HepG2 (cell line): ENCODE measurements at regions of chr4 and their contacts with region 1.

Region 1: DNA sequence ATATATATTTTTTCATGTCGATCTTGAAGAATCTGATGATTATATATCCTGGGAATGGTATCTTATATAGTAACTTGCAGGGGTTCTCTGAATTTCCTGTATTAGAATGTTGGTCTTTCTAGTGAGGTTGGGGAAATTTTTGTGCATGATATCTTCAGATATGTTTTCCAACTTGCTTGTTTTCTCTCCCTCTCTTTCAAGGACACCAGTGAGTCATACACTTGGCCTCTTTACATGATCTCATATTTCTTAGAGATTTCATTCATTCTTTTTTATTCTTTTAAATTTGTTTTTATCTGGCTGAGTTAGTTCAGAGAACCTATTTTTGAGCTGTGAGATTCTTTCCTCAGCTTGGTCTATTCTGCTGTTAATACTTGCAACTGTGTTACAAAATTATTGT is 27.2 kb upstream of the C4orf17 start:
- DNase-seq: no peak
- ATAC-seq: no peak
- H3K4me3 ChIP-seq: no peak overlapping the region
- H3K27ac ChIP-seq: no peak overlapping the region
- H3K4me1 ChIP-seq: no peaks in the 10 kb centered on the region
- H3K27me3 ChIP-seq: no peaks in the 10 kb centered on the region; a peak in 1 of 5 replicates
- CTCF ChIP-seq: no peak
- EP300 ChIP-seq: no peak
- POLR2A ChIP-seq: no peak
- RAD21 ChIP-seq: no peak

Region 2: DNA sequence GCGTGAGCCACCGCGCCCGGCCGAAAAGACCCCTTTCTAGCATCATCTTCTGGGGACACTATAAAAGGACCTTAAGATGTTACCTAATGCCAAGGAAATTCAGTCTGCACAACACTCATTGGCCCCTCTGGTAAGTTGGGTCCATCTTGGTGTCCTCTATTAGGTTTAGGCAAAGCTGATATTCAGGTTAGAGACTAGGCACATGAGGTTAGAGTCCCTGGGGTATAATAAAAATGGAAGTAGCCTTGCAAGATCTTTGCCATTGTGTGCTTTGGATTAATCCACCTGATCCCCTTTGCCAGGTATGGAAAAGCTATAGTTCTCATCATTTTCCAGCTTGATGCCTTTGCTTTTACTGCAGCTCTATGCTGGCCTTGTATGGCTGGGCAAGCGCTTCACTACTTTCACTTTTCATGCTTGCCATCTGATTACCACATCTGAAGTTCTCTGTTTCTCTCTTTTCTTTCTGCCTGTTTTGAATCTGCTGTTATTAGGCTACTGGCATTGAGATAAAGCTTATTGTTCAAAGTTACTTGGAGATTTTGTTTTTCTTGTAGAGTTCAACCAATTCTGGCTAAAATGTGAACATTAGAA is 334.1 kb before region 1 on chr4:
- CTCF ChIA-PET with region 1: no interaction called
- POLR2A ChIA-PET with region 1: no interaction called
- in situ Hi-C with region 1: no loop called
- intact Hi-C with region 1: no loop called
- DNase-seq: no peak
- ATAC-seq: no peak
- H3K4me3 ChIP-seq: no peak overlapping the region
- H3K27ac ChIP-seq: no peak overlapping the region
- H3K4me1 ChIP-seq: peaks cover 39% of the 10 kb centered on the region
- H3K27me3 ChIP-seq: no peaks in the 10 kb centered on the region
- CTCF ChIP-seq: no peak
- EP300 ChIP-seq: no peak
- POLR2A ChIP-seq: no peak
- RAD21 ChIP-seq: no peak

Region 3: DNA sequence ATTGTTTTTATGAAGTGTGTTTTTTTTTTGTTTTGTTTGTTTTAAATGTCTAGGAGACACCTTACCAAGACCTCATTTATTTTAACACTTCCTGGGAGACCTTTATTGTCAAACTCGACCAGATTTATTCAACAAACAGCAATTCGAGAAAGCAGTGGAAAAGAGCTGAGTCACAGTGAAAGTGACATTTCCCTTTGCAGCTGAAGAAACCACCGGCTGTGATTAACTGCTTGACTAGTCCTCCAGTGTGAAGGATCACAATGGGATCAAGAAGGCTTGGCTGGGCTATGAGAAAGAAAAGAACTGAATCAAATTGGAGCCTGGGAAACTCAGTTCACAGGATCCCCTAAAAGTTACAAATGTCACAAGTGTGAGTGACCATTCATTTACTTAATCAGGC is 36.6 kb before region 1 on chr4:
- CTCF ChIA-PET with region 1: no interaction called
- POLR2A ChIA-PET with region 1: no interaction called
- in situ Hi-C with region 1: no loop called
- intact Hi-C with region 1: no loop called
- DNase-seq: no peak
- ATAC-seq: no peak
- H3K4me3 ChIP-seq: no peak overlapping the region
- H3K27ac ChIP-seq: no peak overlapping the region
- H3K4me1 ChIP-seq: no peaks in the 10 kb centered on the region
- H3K27me3 ChIP-seq: no peaks in the 10 kb centered on the region; a peak in 1 of 5 replicates
- CTCF ChIP-seq: no peak
- EP300 ChIP-seq: no peak
- POLR2A ChIP-seq: no peak
- RAD21 ChIP-seq: no peak

Region 4: DNA sequence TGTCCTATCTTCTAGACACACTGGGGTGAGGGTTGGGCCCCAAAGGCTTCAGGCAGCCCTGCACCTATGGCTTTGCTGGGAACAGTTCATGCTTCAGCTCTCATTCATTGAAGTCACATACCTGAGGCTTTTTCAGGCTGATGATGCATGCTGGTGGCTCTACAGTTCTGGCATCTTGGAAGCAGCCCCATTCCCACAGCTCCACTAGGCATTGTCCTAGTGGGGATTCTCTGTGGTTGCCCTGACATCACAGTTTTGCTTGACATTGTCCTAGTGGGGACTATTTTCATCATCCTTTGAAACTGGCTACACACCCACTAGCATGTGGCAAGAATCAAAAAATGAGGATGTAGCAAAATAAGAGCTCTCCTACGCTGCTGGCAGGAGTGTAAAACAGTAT is 10.5 kb before region 1 on chr4:
- CTCF ChIA-PET with region 1: no interaction called
- POLR2A ChIA-PET with region 1: no interaction called
- in situ Hi-C with region 1: no loop called
- intact Hi-C with region 1: loop called (anchors 1 kb)
- DNase-seq: no peak
- ATAC-seq: no peak
- H3K4me3 ChIP-seq: no peak overlapping the region
- H3K27ac ChIP-seq: no peak overlapping the region
- H3K4me1 ChIP-seq: no peaks in the 10 kb centered on the region
- H3K27me3 ChIP-seq: no peaks in the 10 kb centered on the region
- CTCF ChIP-seq: no peak
- EP300 ChIP-seq: no peak
- POLR2A ChIP-seq: no peak
- RAD21 ChIP-seq: no peak